ENCODE measurements at regions of chr14 and their contacts with region 1.

Region 1: DNA sequence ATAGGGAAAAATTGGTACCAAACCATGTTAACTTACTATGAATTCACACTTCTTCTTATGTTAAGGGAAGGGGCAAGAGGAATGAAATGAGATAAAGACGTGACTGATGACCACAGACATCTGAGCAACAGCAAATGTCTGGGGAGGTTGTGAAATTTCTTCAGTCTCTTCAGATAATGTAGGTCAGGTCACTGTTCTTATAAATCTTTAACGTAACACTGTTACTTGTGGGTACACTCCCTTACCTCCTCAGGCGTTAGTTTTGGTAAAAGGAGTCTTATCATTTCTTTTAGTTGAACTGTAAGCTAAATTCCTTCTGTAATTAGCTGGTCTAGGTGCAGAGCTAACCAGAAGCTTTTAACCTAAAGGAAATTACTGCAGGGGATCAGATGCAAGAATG is 405.0 kb upstream of the LRFN5 start:
- DNase-seq: no peak
- ATAC-seq: no peak

Region 2: DNA sequence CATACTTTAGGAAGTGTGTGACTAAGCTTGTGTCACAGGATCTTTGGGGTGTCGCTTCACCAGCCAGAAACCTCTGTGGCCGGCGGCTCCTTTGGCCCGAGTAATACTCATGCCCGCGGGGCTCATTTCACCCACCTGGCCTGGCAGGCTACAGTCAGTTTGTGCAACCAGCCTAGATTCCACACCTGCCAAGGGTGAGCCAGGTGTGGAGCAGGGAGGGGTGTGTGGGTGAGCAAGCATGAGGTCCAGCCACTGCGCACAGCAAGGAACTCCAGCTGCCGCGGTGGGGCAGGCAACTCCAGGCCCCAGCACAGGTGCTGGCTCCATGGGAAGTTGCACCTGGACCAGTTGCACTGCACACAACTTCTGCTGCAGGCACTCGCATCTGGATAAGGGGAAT is 57.4 kb before region 1 on chr14:
- intact Hi-C with region 1: loop called (anchors 10 kb)
- DNase-seq: no peak
- ATAC-seq: no peak

Measured in left ventricle myocardium superior (tissue), 1 donor.